A549 (cell line): ENCODE measurements at regions of chr9 and their contacts with region 1.

Region 1: GRCh38 chr9:37027582-37028419 is 6.3 kb downstream of the PAX5 start:
- DNase-seq: peak; percentile 94 to 100
- ATAC-seq: peak; percentile 86 to 95
- H3K4me3 ChIP-seq: peak overlapping the region; percentile 40
- H3K27ac ChIP-seq: no peak overlapping the region
- H3K4me1 ChIP-seq: peaks cover 22% of the 10 kb centered on the region
- CTCF ChIP-seq: no peak
- EP300 ChIP-seq: no peak
- POLR2A ChIP-seq: no peak
- RAD21 ChIP-seq: no peak

Region 2: DNA sequence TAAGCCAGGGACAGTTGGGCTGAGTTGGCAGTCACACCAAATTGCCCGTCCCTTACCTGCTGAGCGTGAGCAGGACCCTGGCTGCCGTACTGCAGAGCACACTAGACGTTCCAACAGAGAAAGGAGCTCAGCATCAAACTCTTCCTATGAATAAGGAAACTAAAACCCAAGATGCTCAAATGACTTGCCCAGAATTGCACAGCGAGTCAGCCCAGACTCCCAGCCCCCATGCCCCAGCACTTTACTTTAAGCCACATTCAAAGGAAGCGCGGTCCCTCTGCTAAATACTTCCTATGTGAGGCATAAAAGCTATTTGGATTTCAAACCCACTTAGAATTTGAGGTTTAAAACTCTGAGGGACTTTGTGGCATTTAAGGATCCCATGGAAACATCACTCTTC is 17.6 kb before region 1 on chr9:
- CTCF ChIA-PET with region 1: interaction called, 13 read pairs
- POLR2A ChIA-PET with region 1: no interaction called
- DNase-seq: no peak
- ATAC-seq: no peak
- H3K4me3 ChIP-seq: no peak overlapping the region
- H3K27ac ChIP-seq: no peak overlapping the region
- H3K4me1 ChIP-seq: no peaks in the 10 kb centered on the region
- CTCF ChIP-seq: no peak
- EP300 ChIP-seq: no peak
- POLR2A ChIP-seq: no peak
- RAD21 ChIP-seq: no peak